ENCODE measurements at regions of chr6 and their contacts with region 1.

Region 1: GRCh38 chr6:136566007-136566496 is 15.8 kb upstream of the MAP7 start:
- DNase-seq: peak; percentile 44 to 93 (median 85)
- H3K4me3 ChIP-seq: peak overlapping the region in 2 of 7 experiments; percentile 1 to 19
- H3K27ac ChIP-seq: peak overlapping the region; percentile 34 to 78
- H3K4me1 ChIP-seq: peaks cover 35 to 80% (median 66%) of the 10 kb centered on the region in 4 experiments
- H3K27me3 ChIP-seq: no peaks in the 10 kb centered on the region

Region 2: GRCh38 chr6:136579800-136580199 is 13.7 kb after region 1 on chr6:
- CTCF ChIA-PET with region 1: interaction called, 11 read pairs
- POLR2A ChIA-PET with region 1: interaction called, 3 read pairs
- DNase-seq: no peak
- H3K4me3 ChIP-seq: no peak overlapping the region
- H3K27ac ChIP-seq: no peak overlapping the region
- H3K4me1 ChIP-seq: peaks cover 0 to 5% (median 2%) of the 10 kb centered on the region in 4 experiments
- H3K27me3 ChIP-seq: no peaks in the 10 kb centered on the region

Measured in common myeloid progenitor, CD34-positive (primary cell).